MCF 10A (cell line): ENCODE measurements at regions of chr16 and their contacts with region 1.

Region 1: DNA sequence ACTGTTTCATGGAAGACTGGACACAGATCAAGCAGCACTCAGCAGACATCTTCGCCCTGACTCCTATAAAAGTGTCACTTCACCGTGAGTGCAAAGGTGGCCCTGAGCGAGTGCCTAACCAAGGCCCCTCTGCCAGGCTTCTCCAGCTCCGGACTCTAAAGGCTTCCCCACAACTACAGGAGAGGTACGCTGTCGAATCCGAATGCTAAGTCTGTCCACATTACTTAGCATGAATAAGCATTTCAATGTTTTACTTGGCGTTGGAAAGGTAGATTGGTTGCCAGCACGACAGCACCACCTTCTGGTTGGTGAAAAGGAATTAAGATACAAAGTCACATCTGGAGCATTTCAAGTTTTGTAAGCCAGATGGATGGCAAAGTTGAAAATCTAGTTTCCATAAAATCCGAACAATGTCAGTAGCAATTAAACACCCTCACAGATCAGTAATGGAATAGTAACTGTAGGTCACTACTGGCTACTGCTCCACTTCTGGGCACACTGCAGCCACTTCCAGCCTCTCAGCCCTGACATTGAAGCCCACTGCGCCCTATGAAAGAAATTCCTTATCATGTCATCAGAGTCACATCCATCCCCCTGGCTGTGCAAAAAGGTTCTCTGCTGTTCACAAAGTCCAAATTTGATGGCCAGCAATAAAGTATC is 100.9 kb downstream of the PARN start:
- DNase-seq: peak; percentile 93
- H3K4me3 Mint-ChIP-seq: peak overlapping the region; percentile 33
- H3K27ac Mint-ChIP-seq: no peak overlapping the region
- H3K4me1 Mint-ChIP-seq: peaks cover 25% of the 10 kb centered on the region
- H3K27me3 Mint-ChIP-seq: no peaks in the 10 kb centered on the region
- CTCF ChIP-seq: peak; percentile 80

Region 2: GRCh38 chr16:14249291-14250032 is 279.7 kb before region 1 on chr16:
- CTCF ChIA-PET with region 1: interaction called, 14 read pairs
- POLR2A ChIA-PET with region 1: no interaction called
- intact Hi-C with region 1: loop called (anchors 1 kb)
- DNase-seq: peak; percentile 54
- H3K4me3 Mint-ChIP-seq: no peak overlapping the region
- H3K27ac Mint-ChIP-seq: no peak overlapping the region
- H3K4me1 Mint-ChIP-seq: no peaks in the 10 kb centered on the region
- H3K27me3 Mint-ChIP-seq: no peaks in the 10 kb centered on the region
- CTCF ChIP-seq: peak; percentile 77

Region 3: DNA sequence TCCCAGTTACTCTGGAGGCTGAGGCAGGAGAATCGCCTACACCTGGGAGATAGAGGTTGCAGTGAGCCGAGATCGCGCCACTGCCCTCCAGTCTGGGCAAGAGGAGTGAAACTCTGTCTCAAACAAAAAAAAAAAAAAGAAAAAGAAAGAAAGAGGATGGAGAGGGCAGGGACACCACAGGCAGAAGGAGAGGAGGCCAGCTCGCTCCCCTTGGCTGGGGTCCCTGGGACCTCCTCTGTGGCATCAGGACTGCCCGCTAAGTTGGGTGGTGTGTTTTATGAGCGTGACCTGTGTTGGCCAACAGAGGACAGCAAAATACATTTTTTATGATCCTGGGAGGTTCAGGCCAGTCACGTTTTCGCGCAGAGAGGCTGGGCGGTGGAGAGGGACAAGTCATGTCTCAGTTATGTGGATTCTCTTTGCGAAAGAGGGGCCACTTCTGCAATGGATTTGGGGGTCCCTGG is 228.4 kb before region 1 on chr16:
- CTCF ChIA-PET with region 1: interaction called, 106 read pairs
- POLR2A ChIA-PET with region 1: interaction called, 37 read pairs
- intact Hi-C with region 1: loop called (anchors 1 kb)
- DNase-seq: peak; percentile 85
- H3K4me3 Mint-ChIP-seq: peak overlapping the region; percentile 81
- H3K27ac Mint-ChIP-seq: peak overlapping the region; percentile 71
- H3K4me1 Mint-ChIP-seq: peaks cover 22% of the 10 kb centered on the region
- H3K27me3 Mint-ChIP-seq: no peaks in the 10 kb centered on the region
- CTCF ChIP-seq: peak; percentile 76

Region 4: GRCh38 chr16:14364386-14365204 is 164.5 kb before region 1 on chr16:
- CTCF ChIA-PET with region 1: interaction called, 5 read pairs
- POLR2A ChIA-PET with region 1: interaction called, 5 read pairs
- intact Hi-C with region 1: loop called (anchors 2 kb)
- DNase-seq: peak; percentile 68
- H3K4me3 Mint-ChIP-seq: peak overlapping the region; percentile 63
- H3K27ac Mint-ChIP-seq: no peak overlapping the region
- H3K4me1 Mint-ChIP-seq: peaks cover 22% of the 10 kb centered on the region
- H3K27me3 Mint-ChIP-seq: no peaks in the 10 kb centered on the region
- CTCF ChIP-seq: no peak

Region 5: GRCh38 chr16:14486520-14487303 is 42.4 kb before region 1 on chr16:
- CTCF ChIA-PET with region 1: interaction called, 6 read pairs
- POLR2A ChIA-PET with region 1: interaction called, 28 read pairs
- intact Hi-C with region 1: no loop called
- DNase-seq: peak; percentile 96
- H3K4me3 Mint-ChIP-seq: peak overlapping the region; percentile 68
- H3K27ac Mint-ChIP-seq: peak overlapping the region; percentile 67
- H3K4me1 Mint-ChIP-seq: peaks cover 11% of the 10 kb centered on the region
- H3K27me3 Mint-ChIP-seq: no peaks in the 10 kb centered on the region
- CTCF ChIP-seq: no peak

Region 6: GRCh38 chr16:14510939-14511799 is 18.0 kb before region 1 on chr16:
- CTCF ChIA-PET with region 1: interaction called, 20 read pairs
- POLR2A ChIA-PET with region 1: interaction called, 24 read pairs
- intact Hi-C with region 1: no loop called
- DNase-seq: no peak
- H3K4me3 Mint-ChIP-seq: peak overlapping the region; percentile 19
- H3K27ac Mint-ChIP-seq: peak overlapping the region; percentile 91
- H3K4me1 Mint-ChIP-seq: peaks cover 34% of the 10 kb centered on the region
- H3K27me3 Mint-ChIP-seq: no peaks in the 10 kb centered on the region
- CTCF ChIP-seq: no peak

Region 7: DNA sequence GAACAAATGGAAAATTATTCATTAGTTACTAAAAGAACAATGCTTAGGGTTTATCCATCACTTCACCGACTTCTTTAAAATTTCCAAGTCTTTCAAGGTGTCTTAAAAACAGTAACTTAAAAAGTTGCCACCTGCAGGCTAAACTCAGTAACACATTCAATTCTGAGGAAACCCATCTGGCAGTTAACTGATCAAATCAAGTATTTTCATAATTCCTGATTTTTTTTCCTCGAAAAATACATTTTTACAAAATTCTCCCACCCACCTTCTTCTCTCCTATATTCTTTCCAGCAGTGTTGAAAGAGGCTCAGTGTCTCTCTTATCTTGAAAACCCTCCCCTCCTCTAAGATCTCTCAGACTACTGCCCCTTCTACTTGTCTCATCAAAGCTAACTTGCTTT is 71.0 kb after region 1 on chr16:
- CTCF ChIA-PET with region 1: interaction called, 5 read pairs
- POLR2A ChIA-PET with region 1: no interaction called
- intact Hi-C with region 1: loop called (anchors 1 kb)
- DNase-seq: peak; percentile 27
- H3K4me3 Mint-ChIP-seq: no peak overlapping the region
- H3K27ac Mint-ChIP-seq: no peak overlapping the region
- H3K4me1 Mint-ChIP-seq: no peaks in the 10 kb centered on the region
- H3K27me3 Mint-ChIP-seq: no peaks in the 10 kb centered on the region
- CTCF ChIP-seq: peak; percentile 38